Caco-2 (cell line): ENCODE measurements at regions of chr15 and their contacts with region 1.

Region 1: DNA sequence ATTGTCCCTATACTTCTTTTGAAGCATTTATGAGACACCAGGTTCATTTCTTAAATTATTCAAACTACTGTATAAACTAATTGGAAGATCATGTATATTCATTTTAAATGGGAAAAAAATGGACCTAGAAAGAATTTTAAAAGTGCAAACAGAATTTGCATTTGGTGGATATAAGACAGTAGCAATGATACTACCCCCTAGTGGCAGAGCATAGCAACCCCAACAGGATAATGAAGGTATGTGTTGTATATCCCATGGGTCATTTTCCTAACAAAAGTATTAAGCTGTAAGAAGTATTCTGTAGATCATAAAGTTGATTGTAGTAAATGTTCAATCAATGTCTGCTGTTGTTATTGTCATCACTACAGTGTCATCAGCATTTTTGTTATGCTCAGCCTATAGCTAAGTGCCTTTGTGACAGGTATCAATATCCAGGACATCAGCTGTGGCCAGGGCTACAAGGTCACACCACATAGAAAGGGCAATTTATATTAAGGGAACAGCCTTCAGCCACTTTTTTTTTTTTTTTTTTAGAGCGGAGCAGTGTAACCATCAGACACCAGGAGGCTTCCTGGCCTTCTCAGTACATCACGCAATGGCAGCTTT is 175.8 kb downstream of the FOXB1 start:
- DNase-seq: peak; percentile 32 to 34
- H3K4me3 ChIP-seq: no peak overlapping the region
- H3K4me3 Mint-ChIP-seq: no peak overlapping the region
- H3K27ac Mint-ChIP-seq: no peak overlapping the region
- H3K4me1 ChIP-seq: no peaks in the 10 kb centered on the region
- H3K4me1 Mint-ChIP-seq: no peaks in the 10 kb centered on the region
- H3K27me3 ChIP-seq: no peaks in the 10 kb centered on the region; the same call in 1 of the 2 replicates
- H3K27me3 Mint-ChIP-seq: peaks cover 19% of the 10 kb centered on the region
- CTCF ChIP-seq: peak; percentile 50 to 83

Region 2: GRCh38 chr15:59688841-59689625 is 490.9 kb before region 1 on chr15 and contains the start of gene BNIP2:
- CTCF ChIA-PET with region 1: no interaction called
- POLR2A ChIA-PET with region 1: no interaction called
- intact Hi-C with region 1: loop called (anchors 1 kb)
- DNase-seq: peak; percentile 98 to 99
- H3K4me3 ChIP-seq: peak within 1 kb of the TSS; percentile 99
- H3K4me3 Mint-ChIP-seq: peak within 1 kb of the TSS; percentile 87
- H3K27ac Mint-ChIP-seq: peak within 1 kb of the TSS; percentile 90
- H3K4me1 ChIP-seq: 0 out of 2 replicates have a peak, but pooled peaks cover 4% of the 10 kb centered on the region
- H3K4me1 Mint-ChIP-seq: peaks cover 14% of the 10 kb centered on the region
- H3K27me3 ChIP-seq: no peaks in the 10 kb centered on the region
- H3K27me3 Mint-ChIP-seq: no peaks in the 10 kb centered on the region
- CTCF ChIP-seq: no peak
- total RNA-seq, gene BNIP2: 54.0 and 56.0 TPM in 2 replicates

Region 3: GRCh38 chr15:59725172-59725486 is 454.8 kb before region 1 on chr15:
- CTCF ChIA-PET with region 1: interaction called, 5 read pairs
- POLR2A ChIA-PET with region 1: no interaction called
- intact Hi-C with region 1: loop called (anchors 5 kb)
- DNase-seq: no peak
- H3K4me3 ChIP-seq: no peak overlapping the region
- H3K4me3 Mint-ChIP-seq: no peak overlapping the region
- H3K27ac Mint-ChIP-seq: no peak overlapping the region
- H3K4me1 ChIP-seq: no peaks in the 10 kb centered on the region
- H3K4me1 Mint-ChIP-seq: no peaks in the 10 kb centered on the region
- H3K27me3 ChIP-seq: no peaks in the 10 kb centered on the region; the same call in 1 of the 2 replicates
- H3K27me3 Mint-ChIP-seq: peaks cover 13% of the 10 kb centered on the region
- CTCF ChIP-seq: no peak

Region 4: GRCh38 chr15:59917504-59918157 is 262.3 kb before region 1 on chr15:
- CTCF ChIA-PET with region 1: interaction called, 5 read pairs
- POLR2A ChIA-PET with region 1: no interaction called
- intact Hi-C with region 1: loop called (anchors 1 kb)
- DNase-seq: peak; percentile 76 to 84
- H3K4me3 ChIP-seq: no peak overlapping the region
- H3K4me3 Mint-ChIP-seq: no peak overlapping the region
- H3K27ac Mint-ChIP-seq: no peak overlapping the region
- H3K4me1 ChIP-seq: no peaks in the 10 kb centered on the region
- H3K4me1 Mint-ChIP-seq: no peaks in the 10 kb centered on the region
- H3K27me3 ChIP-seq: no peaks in the 10 kb centered on the region
- H3K27me3 Mint-ChIP-seq: peaks cover 17% of the 10 kb centered on the region
- CTCF ChIP-seq: peak; percentile 39 to 60

Region 5: GRCh38 chr15:60195611-60196010 is 15.7 kb after region 1 on chr15:
- CTCF ChIA-PET with region 1: no interaction called
- POLR2A ChIA-PET with region 1: no interaction called
- intact Hi-C with region 1: no loop called
- DNase-seq: no peak
- H3K4me3 ChIP-seq: no peak overlapping the region
- H3K4me3 Mint-ChIP-seq: no peak overlapping the region
- H3K27ac Mint-ChIP-seq: no peak overlapping the region
- H3K4me1 ChIP-seq: no peaks in the 10 kb centered on the region
- H3K4me1 Mint-ChIP-seq: no peaks in the 10 kb centered on the region
- H3K27me3 ChIP-seq: no peaks in the 10 kb centered on the region; the same call in 1 of the 2 replicates
- H3K27me3 Mint-ChIP-seq: peaks cover 16% of the 10 kb centered on the region
- CTCF ChIP-seq: no peak